ENCODE measurements at regions of chr4 and their contacts with region 1.

Region 1: DNA sequence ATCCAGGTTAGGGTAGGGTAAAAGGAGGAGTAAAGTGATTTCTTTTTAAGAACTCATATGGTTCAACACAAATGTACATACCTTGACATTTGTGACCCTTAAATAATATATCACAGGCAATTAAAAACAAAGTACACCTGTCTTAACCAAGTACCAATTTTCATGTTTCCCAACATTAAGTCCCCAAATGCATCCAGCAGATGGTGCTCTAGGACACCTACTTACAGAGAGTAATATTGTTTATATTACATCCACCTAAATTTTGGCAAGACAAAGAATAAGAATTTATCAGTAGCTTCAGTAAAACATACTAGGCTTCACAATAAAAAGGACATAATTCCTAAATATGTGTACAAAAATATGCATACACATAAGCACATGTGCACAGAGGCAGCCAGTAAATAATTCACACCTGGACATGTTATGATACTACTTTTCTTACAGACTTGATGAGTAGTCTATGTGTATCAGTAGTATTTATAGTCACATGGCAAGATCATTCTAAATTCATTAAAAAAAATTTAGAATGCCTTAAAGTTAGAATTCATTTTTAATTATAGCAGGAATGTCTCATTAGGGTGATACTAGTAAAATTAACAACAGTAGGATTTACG is 219.7 kb downstream of the DCLK2 start:
- DNase-seq: peak in 3 of 9 donors; percentile 1 to 8 (median 3)
- ATAC-seq: no peak
- H3K4me3 ChIP-seq: no peak overlapping the region
- H3K4me3 Mint-ChIP-seq: no peak overlapping the region
- H3K27ac ChIP-seq: no peak overlapping the region
- H3K27ac Mint-ChIP-seq: no peak overlapping the region
- H3K4me1 ChIP-seq: no peaks in the 10 kb centered on the region
- H3K4me1 Mint-ChIP-seq: peaks cover 0 to 11% (median 6%) of the 10 kb centered on the region in 7 donors
- H3K27me3 ChIP-seq: no peaks in the 10 kb centered on the region
- H3K27me3 Mint-ChIP-seq: no peaks in the 10 kb centered on the region

Region 2: DNA sequence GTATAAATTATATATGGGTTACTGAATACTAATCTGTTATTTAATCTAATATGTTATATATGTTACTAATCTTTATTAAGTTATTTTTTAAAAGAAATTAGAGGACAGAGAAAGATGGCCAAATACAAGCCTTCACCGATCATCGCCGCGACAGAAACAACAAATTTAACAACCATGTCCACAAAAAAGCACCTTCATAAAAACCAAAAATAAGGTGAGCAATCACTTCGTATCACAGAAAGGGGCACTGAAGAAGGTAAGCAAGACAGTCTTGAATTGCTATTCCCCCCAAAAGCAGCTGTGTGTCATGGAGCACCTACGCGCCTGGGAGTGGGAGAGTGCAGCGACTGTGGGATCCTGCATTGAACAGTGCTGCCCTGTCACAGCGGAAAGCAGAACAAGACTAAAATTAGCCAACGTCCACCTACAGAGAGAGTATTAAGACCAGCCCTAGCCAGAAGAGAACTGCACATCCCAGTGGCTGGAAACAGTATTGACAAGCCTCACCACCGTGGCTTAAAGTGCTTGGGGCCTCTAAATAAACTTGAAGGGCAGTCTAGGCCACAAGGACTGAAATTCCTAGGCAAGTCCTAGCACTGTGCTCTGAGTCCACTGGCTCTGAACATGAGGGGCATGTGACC is 678.6 kb after region 1 on chr4:
- CTCF ChIA-PET with region 1: no interaction called
- POLR2A ChIA-PET with region 1: no interaction called
- intact Hi-C with region 1: loop called in 1 of 2 experiments (anchors 10 kb)
- DNase-seq: no peak
- ATAC-seq: peak; percentile 20
- H3K4me3 ChIP-seq: no peak overlapping the region
- H3K4me3 Mint-ChIP-seq: peak overlapping the region in 2 of 10 donors; percentile 7 to 17
- H3K27ac ChIP-seq: no peak overlapping the region
- H3K27ac Mint-ChIP-seq: no peak overlapping the region
- H3K4me1 ChIP-seq: peaks cover 7 to 16% of the 10 kb centered on the region in 2 donors
- H3K4me1 Mint-ChIP-seq: peaks cover 38 to 96% (median 89%) of the 10 kb centered on the region in 7 donors
- H3K27me3 ChIP-seq: no peaks in the 10 kb centered on the region
- H3K27me3 Mint-ChIP-seq: no peaks in the 10 kb centered on the region